ENCODE measurements at regions of chr4 and their contacts with region 1.

Region 1: GRCh38 chr4:13430834-13431568 is 53.1 kb downstream of the RAB28 start:
- DNase-seq: no peak
- H3K4me3 Mint-ChIP-seq: no peak overlapping the region
- H3K27ac Mint-ChIP-seq: no peak overlapping the region
- H3K4me1 Mint-ChIP-seq: peaks cover 25% of the 10 kb centered on the region
- H3K27me3 Mint-ChIP-seq: no peaks in the 10 kb centered on the region

Region 2: GRCh38 chr4:12729384-12729783 is 701.6 kb before region 1 on chr4:
- CTCF ChIA-PET with region 1: interaction called, 5 read pairs
- POLR2A ChIA-PET with region 1: no interaction called
- intact Hi-C with region 1: loop called (anchors 5 kb)
- DNase-seq: no peak
- H3K4me3 Mint-ChIP-seq: no peak overlapping the region
- H3K27ac Mint-ChIP-seq: no peak overlapping the region
- H3K4me1 Mint-ChIP-seq: no peaks in the 10 kb centered on the region
- H3K27me3 Mint-ChIP-seq: peaks cover 14% of the 10 kb centered on the region

Region 3: DNA sequence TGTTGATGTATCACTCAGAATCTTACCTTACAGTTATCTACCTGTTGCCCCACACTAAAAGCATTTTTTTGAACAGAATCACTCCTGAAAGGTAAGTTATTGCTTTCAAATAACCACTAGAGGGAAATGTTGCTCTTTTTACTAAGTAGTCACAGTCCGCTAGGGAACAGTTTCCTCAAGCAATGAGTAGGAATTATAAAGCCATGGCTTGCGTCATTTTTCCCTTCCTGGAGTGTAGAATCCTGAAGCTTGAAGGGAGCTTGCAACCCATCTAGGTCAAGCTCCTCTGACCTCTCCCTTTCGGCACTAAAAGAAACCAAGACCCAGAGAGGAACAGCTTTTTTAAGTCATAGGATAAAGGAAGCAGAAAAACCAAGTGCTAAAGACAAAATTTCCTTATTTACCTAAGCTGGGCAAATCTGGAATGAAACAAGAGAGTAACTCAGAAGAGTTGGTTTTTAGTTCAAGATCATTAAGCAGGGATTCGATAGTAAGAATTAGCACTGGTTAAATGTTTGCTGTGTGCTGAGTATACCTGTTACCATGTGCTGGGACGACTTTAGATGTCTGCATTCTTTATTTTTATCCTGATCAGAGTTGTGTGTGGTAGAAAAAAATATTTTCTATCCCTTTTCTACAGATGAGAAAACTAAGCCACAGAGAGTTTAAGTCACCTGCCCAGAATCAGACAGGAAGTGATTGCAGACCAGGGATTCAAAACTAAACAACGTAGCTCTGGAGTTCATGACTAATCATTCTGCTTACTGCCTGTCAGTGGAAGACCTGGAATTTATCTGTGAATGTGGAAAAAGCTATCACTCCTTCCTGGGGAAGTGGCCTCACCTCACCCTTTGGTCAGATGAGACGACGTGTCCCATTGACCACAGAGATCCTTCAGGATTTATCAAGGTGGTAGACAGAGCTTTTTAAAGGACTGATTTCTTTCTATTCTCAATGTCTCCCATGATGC is 578.4 kb before region 1 on chr4:
- CTCF ChIA-PET with region 1: interaction called, 3 read pairs
- POLR2A ChIA-PET with region 1: no interaction called
- intact Hi-C with region 1: loop called (anchors 5 kb)
- DNase-seq: no peak
- H3K4me3 Mint-ChIP-seq: no peak overlapping the region
- H3K27ac Mint-ChIP-seq: no peak overlapping the region
- H3K4me1 Mint-ChIP-seq: peaks cover 5% of the 10 kb centered on the region
- H3K27me3 Mint-ChIP-seq: peaks cover 2% of the 10 kb centered on the region